AG04449 (cell line): ENCODE measurements at regions of chr10 and their contacts with region 1.

Region 1: GRCh38 chr10:61750929-61751471 is 88.3 kb downstream of the CABCOCO1 start:
- DNase-seq: no peak
- H3K4me3 ChIP-seq: no peak overlapping the region
- CTCF ChIP-seq: peak; percentile 78

Region 2: DNA sequence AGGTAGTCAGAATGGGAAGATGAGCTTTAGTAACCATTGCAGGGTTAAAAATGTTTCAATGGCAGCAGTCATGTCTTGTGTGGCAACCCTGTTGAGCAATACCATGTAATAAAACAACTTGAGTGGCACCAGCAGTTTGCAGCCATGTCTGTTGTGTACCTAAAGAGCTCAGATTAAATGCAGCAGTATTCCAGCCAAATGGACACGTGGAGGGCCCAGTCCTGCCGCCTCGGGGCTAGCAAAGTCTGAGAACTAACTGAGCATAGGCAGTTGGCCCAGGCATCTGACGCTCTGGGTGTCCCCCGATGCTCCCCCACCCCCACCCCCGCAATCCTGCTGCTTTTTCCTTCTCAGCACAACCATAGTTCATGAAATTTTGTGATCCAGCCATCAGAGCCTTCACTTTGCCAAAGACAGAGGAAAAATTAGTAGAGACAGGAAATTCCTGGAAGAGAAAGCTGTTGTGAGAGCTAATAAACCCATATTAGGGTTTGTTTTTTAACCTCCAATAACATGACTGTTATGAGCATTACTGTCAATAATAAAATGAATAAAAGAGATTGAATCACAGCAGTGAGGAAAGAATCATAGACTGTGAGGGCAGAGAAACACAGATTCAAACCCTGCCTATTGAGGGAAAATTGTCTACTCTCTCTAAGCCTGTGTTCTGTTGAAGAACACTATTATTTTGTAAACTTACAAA is 586.4 kb before region 1 on chr10:
- CTCF ChIA-PET with region 1: no interaction called
- POLR2A ChIA-PET with region 1: no interaction called
- DNase-seq: no peak
- H3K4me3 ChIP-seq: no peak overlapping the region
- CTCF ChIP-seq: no peak

Region 3: DNA sequence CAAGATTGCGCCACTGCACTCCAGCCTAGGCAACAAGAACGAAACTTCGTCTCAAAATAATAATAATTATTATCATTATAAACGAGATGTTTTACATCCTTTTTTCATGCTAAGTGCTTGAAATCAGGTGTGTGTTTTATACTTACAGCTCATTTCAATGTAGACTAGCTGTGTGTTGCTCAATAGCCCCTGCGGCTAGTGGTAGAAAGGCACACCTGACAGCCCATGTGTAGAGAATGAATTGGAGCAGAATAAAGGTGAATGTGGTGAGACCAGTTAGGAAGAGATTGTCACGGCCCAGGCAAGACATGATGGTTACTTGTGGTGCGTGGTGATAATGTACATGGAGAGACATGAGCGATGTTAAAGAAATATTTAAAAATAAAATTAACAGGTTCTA is 211.1 kb before region 1 on chr10:
- CTCF ChIA-PET with region 1: no interaction called
- POLR2A ChIA-PET with region 1: no interaction called
- DNase-seq: no peak
- H3K4me3 ChIP-seq: no peak overlapping the region
- CTCF ChIP-seq: no peak

Region 4: DNA sequence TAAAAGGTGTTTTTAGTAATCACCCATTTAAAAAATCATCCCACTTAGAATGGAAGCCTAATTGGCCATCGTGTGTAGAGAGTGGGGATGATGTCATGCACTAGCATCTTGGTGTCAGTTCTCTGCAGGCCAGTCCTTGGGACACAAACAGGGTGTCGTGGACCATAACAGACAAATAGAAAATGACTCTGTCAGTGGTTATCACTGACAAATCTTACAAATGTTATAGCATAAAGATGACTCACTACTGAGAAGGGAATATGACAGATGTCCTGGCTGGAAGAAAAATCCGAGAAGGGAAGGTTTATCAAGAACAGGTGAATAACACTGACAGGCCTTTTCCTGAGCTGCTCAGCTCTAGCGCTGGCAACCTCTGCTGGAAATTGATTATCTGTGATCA is 77.6 kb before region 1 on chr10:
- CTCF ChIA-PET with region 1: no interaction called
- POLR2A ChIA-PET with region 1: no interaction called
- DNase-seq: no peak
- H3K4me3 ChIP-seq: no peak overlapping the region
- CTCF ChIP-seq: no peak

Region 5: GRCh38 chr10:61733358-61733940 is 17.6 kb before region 1 on chr10:
- CTCF ChIA-PET with region 1: interaction called, 126 read pairs
- POLR2A ChIA-PET with region 1: no interaction called
- DNase-seq: no peak
- H3K4me3 ChIP-seq: no peak overlapping the region
- CTCF ChIP-seq: peak; percentile 45

Region 6: DNA sequence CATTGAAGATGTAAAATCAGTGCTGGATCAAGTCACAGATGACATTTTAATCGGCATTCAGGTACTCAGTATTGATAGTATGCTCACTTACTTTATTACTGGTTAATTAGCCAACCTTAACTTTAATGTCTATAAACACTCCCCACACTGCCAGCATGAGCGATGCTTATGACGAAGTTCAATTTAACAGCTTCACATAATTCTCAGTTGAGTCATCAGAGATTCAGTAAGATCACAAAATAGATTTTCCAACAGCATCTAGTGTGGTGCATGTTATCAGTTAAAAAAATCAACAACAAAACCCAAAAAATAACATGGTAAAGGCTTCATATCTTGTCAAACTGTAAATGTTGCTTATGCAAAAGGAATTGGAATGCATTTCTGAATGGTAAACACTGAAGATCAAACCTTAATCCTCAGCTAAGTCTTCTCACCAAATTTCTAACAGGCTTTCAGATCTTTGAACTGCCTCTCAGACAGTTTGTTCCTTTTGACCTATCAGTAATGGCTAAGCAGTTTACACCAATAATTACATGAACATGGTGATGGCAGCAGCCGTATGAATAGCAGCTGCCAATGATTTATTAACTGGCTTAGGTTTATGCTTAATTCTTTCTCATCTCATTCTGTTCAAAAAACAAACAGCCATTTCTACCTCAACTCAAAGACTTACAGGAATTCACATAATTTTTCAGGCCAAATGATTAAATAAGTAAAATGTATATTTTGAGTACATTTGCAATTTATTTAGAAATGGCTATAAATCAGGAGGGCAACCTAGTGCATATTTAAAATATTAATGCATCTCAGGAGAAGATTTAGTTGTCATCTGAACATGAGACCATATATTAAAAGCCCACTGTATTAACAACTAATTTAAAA is 10.2 kb after region 1 on chr10:
- CTCF ChIA-PET with region 1: interaction called, 21 read pairs
- POLR2A ChIA-PET with region 1: no interaction called
- DNase-seq: peak; percentile 59
- H3K4me3 ChIP-seq: no peak overlapping the region
- CTCF ChIP-seq: no peak

Region 7: DNA sequence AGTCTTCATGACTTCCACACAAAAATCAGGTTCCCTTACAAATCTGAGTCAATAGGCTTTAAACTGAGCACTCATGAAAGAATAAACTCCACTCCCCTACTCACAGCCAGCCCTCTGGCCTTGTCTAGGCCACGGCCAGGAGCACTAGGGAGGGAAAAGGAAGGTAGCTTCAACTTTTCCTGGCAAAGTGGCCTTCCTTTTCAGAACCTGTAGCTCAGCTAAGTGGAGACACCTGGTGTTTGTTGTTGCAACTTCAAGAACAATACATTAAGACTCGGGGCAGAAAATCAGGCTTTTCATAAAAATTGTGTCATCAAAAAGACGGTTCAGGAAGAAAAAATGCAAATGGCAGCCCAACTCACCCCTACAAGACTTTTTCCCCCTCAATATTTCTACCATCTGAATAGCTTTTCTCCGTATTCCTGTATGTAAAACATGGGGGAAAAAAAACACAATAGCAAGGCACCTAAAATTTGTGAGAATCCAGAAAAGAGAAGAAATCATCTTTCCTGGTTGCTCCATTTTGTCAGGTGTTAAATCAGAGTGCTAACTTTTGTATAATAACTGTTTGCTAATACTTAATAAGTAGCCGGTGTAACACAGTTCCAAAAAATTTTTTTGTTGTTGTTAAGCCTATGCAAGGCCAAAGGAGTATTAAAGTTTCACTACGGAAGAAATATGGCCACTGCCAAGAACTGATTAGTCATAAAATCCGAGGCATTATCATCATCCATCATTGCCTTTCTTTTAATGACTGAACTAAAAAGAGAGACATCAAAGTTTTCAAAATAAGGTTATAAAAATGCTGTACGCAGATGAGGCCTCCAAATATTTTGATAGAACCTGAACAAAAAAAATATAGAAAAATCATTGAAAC is 84.3 kb after region 1 on chr10:
- CTCF ChIA-PET with region 1: interaction called, 62 read pairs
- POLR2A ChIA-PET with region 1: no interaction called
- DNase-seq: no peak
- H3K4me3 ChIP-seq: no peak overlapping the region
- CTCF ChIP-seq: peak; percentile 34

Region 8: GRCh38 chr10:61896854-61897661 is 146.1 kb after region 1 on chr10:
- CTCF ChIA-PET with region 1: interaction called, 19 read pairs
- POLR2A ChIA-PET with region 1: no interaction called
- DNase-seq: no peak
- H3K4me3 ChIP-seq: peak overlapping the region; percentile 37
- CTCF ChIP-seq: peak; percentile 56